ENCODE measurements at regions of chr20 and their contacts with region 1.

Region 1: DNA sequence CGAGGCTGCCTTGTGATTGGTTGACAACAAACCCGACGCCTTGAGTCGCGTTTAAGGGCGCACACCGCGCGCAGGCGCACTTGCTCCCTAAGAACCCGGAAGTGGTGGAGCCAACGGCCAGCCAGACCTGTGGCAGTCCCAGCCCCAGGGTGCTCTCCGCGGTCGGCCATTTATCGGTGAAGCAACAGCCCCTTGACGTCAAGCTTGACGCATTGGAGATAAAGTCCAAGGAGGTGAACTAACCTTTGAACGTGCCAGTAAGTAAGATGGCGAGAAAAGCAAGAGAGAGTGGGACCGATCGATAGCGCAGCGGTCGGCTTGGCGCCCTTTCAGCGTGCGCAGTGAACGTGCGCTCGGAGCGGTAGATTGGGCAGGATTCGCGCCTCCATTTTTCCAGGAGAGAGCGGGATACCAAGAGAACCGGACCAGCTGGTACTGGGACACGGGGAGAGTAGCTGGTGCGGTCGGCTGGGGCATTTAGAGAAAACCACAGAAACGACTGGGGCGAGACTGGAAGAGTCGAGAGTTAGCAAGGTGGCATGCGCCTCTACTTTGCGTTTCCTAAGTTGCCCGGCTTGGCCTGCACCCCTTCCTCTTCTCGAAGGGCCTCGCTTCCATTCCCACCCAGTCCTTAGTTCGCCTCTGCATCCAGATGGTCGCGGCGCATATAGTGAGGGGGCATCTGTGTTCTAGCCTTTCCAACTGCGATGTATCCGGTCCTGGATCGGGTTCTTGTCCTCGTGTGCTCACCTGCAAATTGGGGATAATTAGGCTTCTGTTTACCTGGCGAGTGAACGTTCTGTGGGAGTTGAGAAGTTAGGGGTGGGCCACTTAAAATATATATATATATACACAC is at the start of gene CSTF1:
- DNase-seq: peak; percentile 99
- H3K4me3 ChIP-seq: peak within 1 kb of the TSS; percentile 76
- H3K27ac ChIP-seq: peak within 1 kb of the TSS; percentile 72
- H3K4me1 ChIP-seq: peaks cover 24% of the 10 kb centered on the region
- H3K27me3 ChIP-seq: no peaks in the 10 kb centered on the region
- CTCF ChIP-seq: no peak
- total RNA-seq, gene CSTF1: 39.6 and 50.0 TPM in 2 replicates

Region 2: GRCh38 chr20:56219867-56220266 is 172.6 kb before region 1 on chr20:
- CTCF ChIA-PET with region 1: no interaction called
- POLR2A ChIA-PET with region 1: interaction called, 15 read pairs
- intact Hi-C with region 1: no loop called
- DNase-seq: no peak
- H3K4me3 ChIP-seq: no peak overlapping the region
- H3K27ac ChIP-seq: no peak overlapping the region
- H3K4me1 ChIP-seq: no peaks in the 10 kb centered on the region
- H3K27me3 ChIP-seq: peaks cover 26% of the 10 kb centered on the region
- CTCF ChIP-seq: no peak

Region 3: GRCh38 chr20:56278196-56278595 is 114.3 kb before region 1 on chr20:
- CTCF ChIA-PET with region 1: no interaction called
- POLR2A ChIA-PET with region 1: no interaction called
- intact Hi-C with region 1: no loop called
- DNase-seq: no peak
- H3K4me3 ChIP-seq: no peak overlapping the region
- H3K27ac ChIP-seq: no peak overlapping the region
- H3K4me1 ChIP-seq: no peaks in the 10 kb centered on the region
- H3K27me3 ChIP-seq: peaks cover 5% of the 10 kb centered on the region; the same call in 1 of the 2 replicates
- CTCF ChIP-seq: no peak

Region 4: DNA sequence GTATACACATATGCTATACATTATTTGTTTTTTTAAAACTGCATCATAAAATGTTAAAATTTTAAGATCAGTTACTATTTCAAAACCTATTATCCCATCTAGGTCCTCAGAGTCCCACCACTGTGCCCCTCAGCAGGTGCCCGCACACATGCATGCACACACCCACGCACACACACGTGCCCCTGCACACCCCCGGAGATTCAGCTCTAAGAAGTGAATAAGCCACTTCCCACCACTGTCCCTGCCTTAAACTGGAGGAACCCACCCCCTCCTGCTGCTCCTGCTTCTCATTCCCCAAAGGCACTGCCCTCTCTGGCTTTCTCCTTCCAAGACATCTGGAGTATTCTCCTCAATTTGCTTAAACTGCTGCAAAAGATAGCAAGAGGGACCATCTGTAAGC is 39.2 kb before region 1 on chr20:
- CTCF ChIA-PET with region 1: no interaction called
- POLR2A ChIA-PET with region 1: no interaction called
- intact Hi-C with region 1: no loop called
- DNase-seq: no peak
- H3K4me3 ChIP-seq: no peak overlapping the region
- H3K27ac ChIP-seq: no peak overlapping the region
- H3K4me1 ChIP-seq: peaks cover 6% of the 10 kb centered on the region
- H3K27me3 ChIP-seq: peaks cover 88% of the 10 kb centered on the region
- CTCF ChIP-seq: no peak

Region 5: DNA sequence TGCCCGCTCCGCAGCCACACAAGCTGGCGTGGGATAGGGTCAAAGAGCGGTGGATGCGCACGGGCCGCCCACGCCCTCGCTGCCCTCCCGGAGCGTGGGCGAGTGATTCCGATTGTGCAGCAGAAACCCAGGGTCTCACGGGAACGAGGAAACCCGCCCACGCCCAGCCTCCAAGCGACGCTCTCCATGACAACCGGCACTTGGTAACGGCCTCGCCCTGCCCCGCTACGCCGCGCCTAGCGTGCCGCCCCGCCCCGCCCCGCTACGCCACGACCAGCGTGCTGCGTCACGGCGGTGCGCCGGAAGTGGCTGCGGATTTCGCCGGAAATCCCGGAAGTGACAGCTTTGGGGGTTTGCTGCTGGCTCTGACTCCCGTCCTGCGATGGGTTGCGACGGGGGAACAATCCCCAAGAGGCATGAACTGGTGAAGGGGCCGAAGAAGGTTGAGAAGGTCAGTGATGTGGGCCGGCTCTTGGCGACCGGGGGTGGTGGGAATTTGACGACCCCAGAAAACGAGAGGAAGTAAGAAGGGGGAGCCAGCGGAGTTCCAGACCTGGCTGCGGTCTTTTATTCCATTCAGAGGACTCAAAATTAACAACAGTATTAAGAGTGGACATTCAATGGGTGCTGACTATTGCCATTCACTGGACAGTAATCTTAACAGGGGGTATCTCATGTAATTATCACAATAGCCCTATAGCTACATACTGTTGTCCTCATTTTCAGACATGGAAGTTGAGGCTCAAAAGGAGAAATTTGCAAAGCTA is 76.0 kb after region 1 on chr20 and contains the start of gene RTF2:
- CTCF ChIA-PET with region 1: no interaction called
- POLR2A ChIA-PET with region 1: no interaction called
- intact Hi-C with region 1: loop called (anchors 2 kb)
- DNase-seq: peak; percentile 84 to 96
- H3K4me3 ChIP-seq: peak within 1 kb of the TSS; percentile 86
- H3K27ac ChIP-seq: 0 out of 2 replicates have a peak within 1 kb of the TSS, but pooled peaks have one; percentile 16
- H3K4me1 ChIP-seq: peaks cover 17% of the 10 kb centered on the region
- H3K27me3 ChIP-seq: no peaks in the 10 kb centered on the region; the same call in 1 of the 2 replicates
- CTCF ChIP-seq: no peak
- total RNA-seq, gene RTF2: 96.2 and 108 TPM in 2 replicates

Region 6: GRCh38 chr20:56504373-56505005 is 112.0 kb after region 1 on chr20:
- CTCF ChIA-PET with region 1: no interaction called
- POLR2A ChIA-PET with region 1: interaction called, 17 read pairs
- intact Hi-C with region 1: no loop called
- DNase-seq: no peak
- H3K4me3 ChIP-seq: no peak overlapping the region
- H3K27ac ChIP-seq: no peak overlapping the region
- H3K4me1 ChIP-seq: no peaks in the 10 kb centered on the region
- H3K27me3 ChIP-seq: no peaks in the 10 kb centered on the region
- CTCF ChIP-seq: peak; percentile 63

Region 7: GRCh38 chr20:56676001-56676400 is 283.5 kb after region 1 on chr20:
- CTCF ChIA-PET with region 1: no interaction called
- POLR2A ChIA-PET with region 1: no interaction called
- intact Hi-C with region 1: no loop called
- DNase-seq: no peak
- H3K4me3 ChIP-seq: no peak overlapping the region
- H3K27ac ChIP-seq: no peak overlapping the region
- H3K4me1 ChIP-seq: no peaks in the 10 kb centered on the region
- H3K27me3 ChIP-seq: no peaks in the 10 kb centered on the region
- CTCF ChIP-seq: no peak